ENCODE measurements at regions of chr19 and their contacts with region 1.

Region 1: DNA sequence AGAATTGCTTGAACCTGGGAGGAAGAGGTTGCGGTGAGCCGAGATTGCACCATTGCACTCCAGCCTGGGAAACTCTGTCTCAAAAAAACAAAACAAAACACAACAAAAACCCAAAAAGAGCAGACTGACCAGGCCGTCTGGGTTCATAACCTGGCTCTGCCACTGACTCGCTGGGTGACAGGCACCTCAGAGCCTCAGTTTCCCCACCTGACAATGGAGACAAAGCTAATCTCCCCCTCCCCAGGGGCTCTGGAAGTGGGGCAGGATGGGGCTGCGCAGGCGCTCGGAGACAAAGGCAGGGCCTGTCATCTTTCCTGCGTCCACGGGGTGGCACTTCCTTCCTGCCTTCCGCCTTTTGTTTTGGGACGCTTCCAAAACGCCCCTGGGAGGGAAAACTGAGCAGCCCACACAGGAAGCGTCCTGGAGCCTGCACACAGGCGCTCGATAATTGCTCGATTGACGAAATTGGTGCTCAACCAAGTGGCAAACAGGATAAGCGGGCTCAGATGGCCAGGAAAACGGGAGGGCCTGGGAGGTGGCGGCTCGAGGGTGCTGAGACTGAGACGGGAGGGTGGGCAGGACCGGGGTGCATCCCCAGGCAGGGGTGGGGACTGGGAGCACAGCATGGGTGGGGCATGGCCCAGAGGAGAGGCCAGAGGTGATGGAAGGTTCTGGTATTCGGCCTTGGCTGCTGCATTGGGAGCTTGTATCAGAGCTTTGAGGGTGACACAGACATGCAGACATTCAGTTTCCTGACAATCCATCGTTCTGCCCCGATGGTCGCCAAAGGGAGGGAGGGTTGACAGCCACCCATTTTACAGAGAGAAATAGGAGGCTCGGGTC is 17.8 kb downstream of the SPC24 start:
- DNase-seq: peak; percentile 77 to 79
- H3K4me3 ChIP-seq: peak overlapping the region; percentile 50
- H3K4me3 Mint-ChIP-seq: peak overlapping the region; percentile 66
- H3K27ac Mint-ChIP-seq: peak overlapping the region; percentile 7
- H3K4me1 ChIP-seq: peaks cover 19% of the 10 kb centered on the region
- H3K4me1 Mint-ChIP-seq: no peaks in the 10 kb centered on the region
- H3K27me3 ChIP-seq: no peaks in the 10 kb centered on the region
- H3K27me3 Mint-ChIP-seq: no peaks in the 10 kb centered on the region
- CTCF ChIP-seq: peak; percentile 71 to 79

Region 2: GRCh38 chr19:11078893-11079292 is 58.9 kb before region 1 on chr19:
- CTCF ChIA-PET with region 1: no interaction called
- POLR2A ChIA-PET with region 1: no interaction called
- intact Hi-C with region 1: no loop called
- DNase-seq: no peak
- H3K4me3 ChIP-seq: no peak overlapping the region
- H3K4me3 Mint-ChIP-seq: no peak overlapping the region
- H3K27ac Mint-ChIP-seq: no peak overlapping the region
- H3K4me1 ChIP-seq: no peaks in the 10 kb centered on the region
- H3K4me1 Mint-ChIP-seq: no peaks in the 10 kb centered on the region
- H3K27me3 ChIP-seq: no peaks in the 10 kb centered on the region
- H3K27me3 Mint-ChIP-seq: no peaks in the 10 kb centered on the region
- CTCF ChIP-seq: no peak

Region 3: GRCh38 chr19:11155373-11156120 is 17.8 kb after region 1 on chr19 and contains the start of gene SPC24:
- CTCF ChIA-PET with region 1: interaction called, 4 read pairs
- POLR2A ChIA-PET with region 1: interaction called, 3 read pairs
- intact Hi-C with region 1: loop called (anchors 2 kb)
- DNase-seq: peak; percentile 96 to 97
- H3K4me3 ChIP-seq: peak within 1 kb of the TSS; percentile 99
- H3K4me3 Mint-ChIP-seq: peak within 1 kb of the TSS; percentile 73
- H3K27ac Mint-ChIP-seq: peak within 1 kb of the TSS; percentile 2
- H3K4me1 ChIP-seq: peaks cover 9% of the 10 kb centered on the region; the same call in 1 of the 2 replicates
- H3K4me1 Mint-ChIP-seq: peaks cover 11% of the 10 kb centered on the region
- H3K27me3 ChIP-seq: no peaks in the 10 kb centered on the region
- H3K27me3 Mint-ChIP-seq: no peaks in the 10 kb centered on the region
- CTCF ChIP-seq: no peak
- total RNA-seq, gene SPC24: 35.7 and 44.8 TPM in 2 replicates

Region 4: GRCh38 chr19:11203194-11204075 is 65.7 kb after region 1 on chr19:
- CTCF ChIA-PET with region 1: no interaction called
- POLR2A ChIA-PET with region 1: no interaction called
- intact Hi-C with region 1: loop called (anchors 1 kb)
- DNase-seq: peak in 1 of 2 experiments; percentile 73
- H3K4me3 ChIP-seq: no peak overlapping the region
- H3K4me3 Mint-ChIP-seq: no peak overlapping the region
- H3K27ac Mint-ChIP-seq: no peak overlapping the region
- H3K4me1 ChIP-seq: no peaks in the 10 kb centered on the region
- H3K4me1 Mint-ChIP-seq: peaks cover 6% of the 10 kb centered on the region
- H3K27me3 ChIP-seq: no peaks in the 10 kb centered on the region
- H3K27me3 Mint-ChIP-seq: no peaks in the 10 kb centered on the region
- CTCF ChIP-seq: peak; percentile 81 to 84